ENCODE measurements at regions of chr12 and their contacts with region 1.

Region 1: DNA sequence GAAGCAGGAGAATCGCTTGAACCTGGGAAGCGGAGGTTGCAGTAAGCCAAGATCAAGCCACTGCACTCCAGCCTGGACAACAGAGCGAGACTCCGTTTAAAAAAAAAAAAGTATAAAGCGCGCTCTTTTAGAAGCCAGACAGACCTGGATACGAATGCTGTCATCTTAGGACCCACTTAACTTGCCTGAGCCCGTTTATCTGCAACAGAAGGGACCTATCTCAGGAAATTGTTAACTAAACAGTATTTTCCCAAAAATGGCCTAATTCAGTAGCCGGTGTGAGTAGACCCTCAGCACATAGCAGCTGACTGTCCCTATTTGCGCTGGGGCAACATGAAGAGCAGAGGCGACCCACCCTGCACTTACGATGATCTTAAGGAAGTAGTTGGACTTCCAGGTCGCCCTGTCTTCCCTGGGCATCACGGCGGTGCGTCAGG is 529 bp downstream of the RPLP0 start:
- DNase-seq: no peak
- H3K4me3 Mint-ChIP-seq: peak overlapping the region; percentile 84
- H3K27ac Mint-ChIP-seq: peak overlapping the region; percentile 98
- H3K4me1 Mint-ChIP-seq: peaks cover 23% of the 10 kb centered on the region
- H3K27me3 Mint-ChIP-seq: no peaks in the 10 kb centered on the region
- CTCF ChIP-seq: no peak

Region 2: GRCh38 chr12:120181991-120182631 is 18.3 kb before region 1 on chr12:
- CTCF ChIA-PET with region 1: interaction called, 7 read pairs
- POLR2A ChIA-PET with region 1: interaction called, 13 read pairs
- intact Hi-C with region 1: no loop called
- DNase-seq: peak; percentile 86
- H3K4me3 Mint-ChIP-seq: peak overlapping the region; percentile 30
- H3K27ac Mint-ChIP-seq: peak overlapping the region; percentile 57
- H3K4me1 Mint-ChIP-seq: peaks cover 12% of the 10 kb centered on the region
- H3K27me3 Mint-ChIP-seq: no peaks in the 10 kb centered on the region
- CTCF ChIP-seq: no peak

Region 3: GRCh38 chr12:120332523-120332922 is 132.1 kb after region 1 on chr12:
- CTCF ChIA-PET with region 1: no interaction called
- POLR2A ChIA-PET with region 1: no interaction called
- intact Hi-C with region 1: no loop called
- DNase-seq: no peak
- H3K4me3 Mint-ChIP-seq: no peak overlapping the region
- H3K27ac Mint-ChIP-seq: no peak overlapping the region
- H3K4me1 Mint-ChIP-seq: no peaks in the 10 kb centered on the region
- H3K27me3 Mint-ChIP-seq: no peaks in the 10 kb centered on the region
- CTCF ChIP-seq: no peak